PC-3 (cell line): ENCODE measurements at regions of chr20 and their contacts with region 1.

Region 1: GRCh38 chr20:7859356-7859802 is 80.9 kb downstream of the HAO1 start:
- DNase-seq: peak; percentile 84
- ATAC-seq: peak; percentile 60
- H3K4me3 ChIP-seq: no peak overlapping the region
- H3K27ac ChIP-seq: peak overlapping the region; percentile 96
- H3K4me1 ChIP-seq: peaks cover 44% of the 10 kb centered on the region
- H3K27me3 ChIP-seq: no peaks in the 10 kb centered on the region
- CTCF ChIP-seq: peak; percentile 95

Region 2: DNA sequence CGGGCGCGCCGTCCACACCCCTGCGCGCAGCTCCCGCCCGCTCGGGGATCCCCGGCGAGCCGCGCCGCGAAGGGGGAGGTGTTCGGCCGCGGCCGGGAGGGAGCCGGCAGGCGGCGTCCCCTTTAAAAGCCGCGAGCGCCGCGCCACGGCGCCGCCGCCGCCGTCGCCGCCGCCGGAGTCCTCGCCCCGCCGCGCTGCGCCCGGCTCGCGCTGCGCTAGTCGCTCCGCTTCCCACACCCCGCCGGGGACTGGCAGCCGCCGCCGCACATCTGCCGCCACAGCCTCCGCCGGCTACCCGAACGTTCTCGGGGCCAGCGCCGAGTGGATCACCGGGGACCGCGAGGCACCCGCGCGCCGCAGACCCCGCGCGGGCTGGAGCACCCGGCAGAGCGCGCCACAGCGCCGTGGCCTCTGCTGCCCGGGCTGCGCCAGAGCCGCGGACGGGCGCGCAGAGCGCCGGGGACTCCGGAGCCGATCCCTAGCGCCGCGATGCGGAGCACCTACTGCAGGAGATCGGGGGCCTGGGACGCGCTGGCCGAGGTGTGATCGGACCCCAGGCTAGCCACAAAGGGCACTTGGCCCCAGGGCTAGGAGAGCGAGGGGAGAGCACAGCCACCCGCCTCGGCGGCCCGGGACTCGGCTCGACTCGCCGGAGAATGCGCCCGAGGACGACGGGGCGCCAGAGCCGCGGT is 1091.7 kb before region 1 on chr20 and contains the start of gene BMP2:
- CTCF ChIA-PET with region 1: no interaction called
- POLR2A ChIA-PET with region 1: no interaction called
- intact Hi-C with region 1: loop called (anchors 1 kb)
- DNase-seq: peak; percentile 28
- ATAC-seq: peak; percentile 69
- H3K4me3 ChIP-seq: peak within 1 kb of the TSS; percentile 67
- H3K27ac ChIP-seq: no peak within 1 kb of the TSS
- H3K4me1 ChIP-seq: no peaks in the 10 kb centered on the region
- H3K27me3 ChIP-seq: peaks cover 51% of the 10 kb centered on the region
- CTCF ChIP-seq: no peak
- total RNA-seq, gene BMP2: 0.40 and 0.73 TPM in 2 replicates

Region 3: GRCh38 chr20:7113577-7114466 is 745.6 kb before region 1 on chr20:
- CTCF ChIA-PET with region 1: no interaction called
- POLR2A ChIA-PET with region 1: no interaction called
- intact Hi-C with region 1: loop called (anchors 5 kb)
- DNase-seq: peak; percentile 59
- ATAC-seq: peak; percentile 85
- H3K4me3 ChIP-seq: no peak overlapping the region
- H3K27ac ChIP-seq: no peak overlapping the region
- H3K4me1 ChIP-seq: no peaks in the 10 kb centered on the region
- H3K27me3 ChIP-seq: peaks cover 40% of the 10 kb centered on the region
- CTCF ChIP-seq: peak; percentile 85

Region 4: GRCh38 chr20:7375905-7376304 is 483.5 kb before region 1 on chr20:
- CTCF ChIA-PET with region 1: no interaction called
- POLR2A ChIA-PET with region 1: no interaction called
- intact Hi-C with region 1: loop called (anchors 1 kb)
- DNase-seq: peak; percentile 73
- ATAC-seq: no peak
- H3K4me3 ChIP-seq: no peak overlapping the region
- H3K27ac ChIP-seq: no peak overlapping the region
- H3K4me1 ChIP-seq: peaks cover 11% of the 10 kb centered on the region; the same call in 1 of the 2 replicates
- H3K27me3 ChIP-seq: no peaks in the 10 kb centered on the region
- CTCF ChIP-seq: peak; percentile 51

Region 5: GRCh38 chr20:7610681-7611080 is 248.7 kb before region 1 on chr20:
- CTCF ChIA-PET with region 1: no interaction called
- POLR2A ChIA-PET with region 1: no interaction called
- intact Hi-C with region 1: loop called (anchors 2 kb)
- DNase-seq: peak; percentile 75
- ATAC-seq: peak; percentile 89
- H3K4me3 ChIP-seq: peak overlapping the region; percentile 14; the same call in 1 of the 2 replicates
- H3K27ac ChIP-seq: peak overlapping the region; percentile 4; the same call in 1 of the 2 replicates
- H3K4me1 ChIP-seq: peaks cover 12% of the 10 kb centered on the region
- H3K27me3 ChIP-seq: no peaks in the 10 kb centered on the region
- CTCF ChIP-seq: no peak

Region 6: DNA sequence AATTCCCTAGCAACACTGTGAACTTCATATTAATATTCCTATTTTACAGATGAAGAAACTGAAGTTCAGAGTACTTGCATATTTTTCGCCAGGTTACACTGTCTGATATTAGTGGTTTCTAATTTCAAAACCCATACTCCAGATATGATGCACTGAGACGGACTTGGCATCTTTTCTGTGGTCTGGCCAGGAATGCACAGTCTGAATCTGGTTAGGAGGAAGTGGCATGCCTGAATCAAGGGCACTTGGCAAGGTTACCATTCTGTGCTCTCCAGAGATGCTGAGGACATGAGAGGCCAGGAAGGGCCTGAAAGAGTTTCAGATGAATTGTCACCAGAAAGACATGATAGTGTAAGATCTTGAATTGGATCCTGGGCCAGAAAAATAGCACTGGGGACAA is 69.2 kb before region 1 on chr20:
- CTCF ChIA-PET with region 1: no interaction called
- POLR2A ChIA-PET with region 1: no interaction called
- intact Hi-C with region 1: loop called (anchors 5 kb)
- DNase-seq: peak; percentile 90
- ATAC-seq: peak; percentile 90
- H3K4me3 ChIP-seq: no peak overlapping the region
- H3K27ac ChIP-seq: peak overlapping the region; percentile 15; the same call in 1 of the 2 replicates
- H3K4me1 ChIP-seq: peaks cover 24% of the 10 kb centered on the region
- H3K27me3 ChIP-seq: no peaks in the 10 kb centered on the region
- CTCF ChIP-seq: no peak

Region 7: GRCh38 chr20:7926767-7927166 is 67.4 kb after region 1 on chr20:
- CTCF ChIA-PET with region 1: interaction called, 4 read pairs
- POLR2A ChIA-PET with region 1: interaction called, 3 read pairs
- intact Hi-C with region 1: loop called (anchors 2 kb)
- DNase-seq: peak; percentile 67
- ATAC-seq: no peak; the same call in 1 of the 2 replicates
- H3K4me3 ChIP-seq: no peak overlapping the region
- H3K27ac ChIP-seq: peak overlapping the region; percentile 50
- H3K4me1 ChIP-seq: peaks cover 27% of the 10 kb centered on the region
- H3K27me3 ChIP-seq: no peaks in the 10 kb centered on the region
- CTCF ChIP-seq: peak; percentile 92